CD4-positive, alpha-beta memory T cell (primary cell): ENCODE measurements at regions of chr3 and their contacts with region 1.

Region 1: GRCh38 chr3:9890249-9891071 is at the start of gene JAGN1:
- DNase-seq: peak; percentile 87 to 92 (median 89)
- H3K4me3 ChIP-seq: peak within 1 kb of the TSS; percentile 56 to 93
- H3K4me3 Mint-ChIP-seq: peak within 1 kb of the TSS; percentile 94 to 100 (median 98)
- H3K27ac ChIP-seq: peak within 1 kb of the TSS; percentile 100
- H3K27ac Mint-ChIP-seq: peak within 1 kb of the TSS; percentile 99 to 100 (median 99)
- H3K4me1 ChIP-seq: peaks cover 39% of the 10 kb centered on the region
- H3K4me1 Mint-ChIP-seq: peaks cover 22 to 51% (median 34%) of the 10 kb centered on the region in 4 donors
- H3K27me3 ChIP-seq: no peaks in the 10 kb centered on the region
- H3K27me3 Mint-ChIP-seq: no peaks in the 10 kb centered on the region
- total RNA-seq, gene JAGN1: 26.5 to 29.1 TPM

Region 2: DNA sequence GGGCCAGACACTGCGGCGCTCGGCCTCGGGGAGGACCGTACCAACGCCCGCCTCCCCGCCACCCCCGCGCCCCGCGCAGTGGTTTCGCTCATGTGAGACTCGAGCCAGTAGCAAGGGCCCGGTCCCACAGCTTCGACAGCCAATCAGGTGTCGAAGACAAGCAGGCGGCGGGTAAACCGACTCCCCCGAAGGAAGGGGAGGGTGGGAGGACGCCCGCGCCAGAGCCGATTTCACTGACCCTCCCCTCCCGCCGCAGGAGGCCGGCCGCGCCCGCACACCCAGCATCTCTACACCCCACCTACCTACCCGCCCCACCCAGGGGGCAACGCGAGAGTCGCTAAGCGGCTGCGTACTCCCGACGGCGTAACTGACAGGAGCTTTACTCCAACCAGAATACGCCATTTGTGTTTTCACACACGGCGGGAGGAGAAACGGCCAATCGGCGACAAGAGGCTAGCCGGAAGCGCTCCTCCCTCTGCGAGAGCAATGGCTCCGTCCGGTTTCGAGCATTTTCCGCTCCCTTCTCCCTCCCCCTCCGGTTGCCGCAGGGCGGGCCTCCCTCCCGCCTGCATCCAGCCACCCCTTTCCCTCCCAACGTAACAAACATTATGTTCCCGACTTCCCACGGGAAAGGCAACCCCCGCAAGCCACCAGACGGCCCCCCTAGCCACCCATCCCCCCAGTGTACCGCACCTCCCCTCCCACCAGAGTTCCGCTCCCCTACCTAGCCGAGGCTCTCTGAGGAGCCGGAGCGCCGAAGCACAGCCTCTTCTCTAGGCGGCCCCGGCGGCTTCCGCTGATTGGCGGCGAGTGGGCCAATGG is 493.5 kb before region 1 on chr3:
- CTCF ChIA-PET with region 1: no interaction called
- POLR2A ChIA-PET with region 1: interaction called, 3 read pairs
- intact Hi-C with region 1: loop called (anchors 1 kb)
- DNase-seq: peak; percentile 99 to 100 (median 100)
- H3K4me3 ChIP-seq: peak overlapping the region in 1 of 2 donors; percentile 71
- H3K4me3 Mint-ChIP-seq: peak overlapping the region; percentile 90 to 99 (median 96)
- H3K27ac ChIP-seq: peak overlapping the region; percentile 83
- H3K27ac Mint-ChIP-seq: peak overlapping the region; percentile 96 to 99 (median 99)
- H3K4me1 ChIP-seq: peaks cover 73% of the 10 kb centered on the region
- H3K4me1 Mint-ChIP-seq: peaks cover 49 to 87% (median 68%) of the 10 kb centered on the region in 4 donors
- H3K27me3 ChIP-seq: no peaks in the 10 kb centered on the region
- H3K27me3 Mint-ChIP-seq: peaks cover 0 to 3% of the 10 kb centered on the region in 2 donors

Region 3: GRCh38 chr3:9749645-9750555 is 140.6 kb before region 1 on chr3 and contains the start of gene OGG1:
- CTCF ChIA-PET with region 1: no interaction called
- POLR2A ChIA-PET with region 1: no interaction called
- intact Hi-C with region 1: loop called (anchors 1 kb)
- DNase-seq: peak; percentile 95 to 98 (median 96)
- H3K4me3 ChIP-seq: peak within 1 kb of the TSS; percentile 58 to 92
- H3K4me3 Mint-ChIP-seq: peak within 1 kb of the TSS; percentile 88 to 98 (median 96)
- H3K27ac ChIP-seq: peak within 1 kb of the TSS; percentile 59
- H3K27ac Mint-ChIP-seq: peak within 1 kb of the TSS; percentile 93 to 98 (median 95)
- H3K4me1 ChIP-seq: peaks cover 38% of the 10 kb centered on the region
- H3K4me1 Mint-ChIP-seq: peaks cover 25 to 54% (median 39%) of the 10 kb centered on the region in 4 donors
- H3K27me3 ChIP-seq: no peaks in the 10 kb centered on the region
- H3K27me3 Mint-ChIP-seq: no peaks in the 10 kb centered on the region
- total RNA-seq, gene OGG1: 40.4 to 46.9 TPM

Region 4: GRCh38 chr3:9843715-9844438 is 46.6 kb before region 1 on chr3 and contains the start of gene RPUSD3:
- CTCF ChIA-PET with region 1: interaction called, 4 read pairs
- POLR2A ChIA-PET with region 1: interaction called, 20 read pairs
- intact Hi-C with region 1: loop called (anchors 1 kb)
- DNase-seq: peak; percentile 92 to 98 (median 93)
- H3K4me3 ChIP-seq: peak within 1 kb of the TSS; percentile 80 to 92
- H3K4me3 Mint-ChIP-seq: peak within 1 kb of the TSS; percentile 96 to 99 (median 97)
- H3K27ac ChIP-seq: peak within 1 kb of the TSS; percentile 65
- H3K27ac Mint-ChIP-seq: peak within 1 kb of the TSS; percentile 87 to 97 (median 92)
- H3K4me1 ChIP-seq: peaks cover 23% of the 10 kb centered on the region
- H3K4me1 Mint-ChIP-seq: peaks cover 10 to 36% (median 21%) of the 10 kb centered on the region in 4 donors
- H3K27me3 ChIP-seq: no peaks in the 10 kb centered on the region
- H3K27me3 Mint-ChIP-seq: no peaks in the 10 kb centered on the region
- total RNA-seq, gene RPUSD3: 63.3 to 67.6 TPM

Region 5: GRCh38 chr3:9915254-9916141 is 25.0 kb after region 1 on chr3:
- CTCF ChIA-PET with region 1: interaction called, 16 read pairs
- POLR2A ChIA-PET with region 1: interaction called, 13 read pairs
- intact Hi-C with region 1: loop called (anchors 2 kb)
- DNase-seq: peak in 1 of 5 donors; percentile 25
- H3K4me3 ChIP-seq: peak overlapping the region; percentile 36 to 55
- H3K4me3 Mint-ChIP-seq: peak overlapping the region; percentile 62 to 85 (median 79)
- H3K27ac ChIP-seq: no peak overlapping the region
- H3K27ac Mint-ChIP-seq: peak overlapping the region in 1 of 7 donors; percentile 17
- H3K4me1 ChIP-seq: peaks cover 30% of the 10 kb centered on the region
- H3K4me1 Mint-ChIP-seq: peaks cover 13 to 23% (median 17%) of the 10 kb centered on the region in 4 donors
- H3K27me3 ChIP-seq: no peaks in the 10 kb centered on the region
- H3K27me3 Mint-ChIP-seq: peaks cover 0 to 2% of the 10 kb centered on the region in 2 donors

Region 6: GRCh38 chr3:9940764-9941163 is 50.3 kb after region 1 on chr3:
- CTCF ChIA-PET with region 1: no interaction called
- POLR2A ChIA-PET with region 1: no interaction called
- intact Hi-C with region 1: no loop called
- DNase-seq: no peak
- H3K4me3 ChIP-seq: no peak overlapping the region
- H3K4me3 Mint-ChIP-seq: no peak overlapping the region
- H3K27ac ChIP-seq: no peak overlapping the region
- H3K27ac Mint-ChIP-seq: no peak overlapping the region
- H3K4me1 ChIP-seq: peaks cover 4% of the 10 kb centered on the region
- H3K4me1 Mint-ChIP-seq: peaks cover 1 to 22% (median 6%) of the 10 kb centered on the region in 4 donors
- H3K27me3 ChIP-seq: no peaks in the 10 kb centered on the region
- H3K27me3 Mint-ChIP-seq: no peaks in the 10 kb centered on the region

Region 7: GRCh38 chr3:9951962-9952805 is 61.7 kb after region 1 on chr3 and contains the start of gene PRRT3:
- CTCF ChIA-PET with region 1: interaction called, 16 read pairs
- POLR2A ChIA-PET with region 1: interaction called, 13 read pairs
- intact Hi-C with region 1: no loop called
- DNase-seq: peak; percentile 52 to 64 (median 58)
- H3K4me3 ChIP-seq: peak within 1 kb of the TSS; percentile 68 to 72
- H3K4me3 Mint-ChIP-seq: peak within 1 kb of the TSS; percentile 86 to 91 (median 90)
- H3K27ac ChIP-seq: peak within 1 kb of the TSS; percentile 50
- H3K27ac Mint-ChIP-seq: peak within 1 kb of the TSS; percentile 62 to 80 (median 72)
- H3K4me1 ChIP-seq: peaks cover 11% of the 10 kb centered on the region
- H3K4me1 Mint-ChIP-seq: peaks cover 6 to 28% (median 13%) of the 10 kb centered on the region in 4 donors
- H3K27me3 ChIP-seq: no peaks in the 10 kb centered on the region
- H3K27me3 Mint-ChIP-seq: no peaks in the 10 kb centered on the region
- total RNA-seq, gene PRRT3: 8.2 to 9.8 TPM

Region 8: GRCh38 chr3:10026084-10026890 is 135.8 kb after region 1 on chr3 and contains the start of gene FANCD2:
- CTCF ChIA-PET with region 1: no interaction called
- POLR2A ChIA-PET with region 1: no interaction called
- intact Hi-C with region 1: loop called (anchors 1 kb)
- DNase-seq: peak; percentile 91 to 96 (median 91)
- H3K4me3 ChIP-seq: peak within 1 kb of the TSS; percentile 84 to 88
- H3K4me3 Mint-ChIP-seq: peak within 1 kb of the TSS; percentile 94 to 99 (median 96)
- H3K27ac ChIP-seq: peak within 1 kb of the TSS; percentile 87
- H3K27ac Mint-ChIP-seq: peak within 1 kb of the TSS; percentile 97 to 99 (median 98)
- H3K4me1 ChIP-seq: peaks cover 25% of the 10 kb centered on the region
- H3K4me1 Mint-ChIP-seq: peaks cover 9 to 43% (median 19%) of the 10 kb centered on the region in 4 donors
- H3K27me3 ChIP-seq: no peaks in the 10 kb centered on the region
- H3K27me3 Mint-ChIP-seq: no peaks in the 10 kb centered on the region
- total RNA-seq, gene FANCD2: 28.1 to 28.3 TPM